Activated CD8-positive, alpha-beta T cell treated with anti-CD3 and anti-CD28 coated beads for 36 hours (primary cell): ENCODE measurements at regions of chr3 and their contacts with region 1.

Region 1: GRCh38 chr3:48268381-48269183 is 27.7 kb downstream of the ZNF589 start:
- DNase-seq: peak; percentile 98
- ATAC-seq: peak; percentile 93
- H3K4me3 Mint-ChIP-seq: peak overlapping the region; percentile 61
- H3K27ac Mint-ChIP-seq: peak overlapping the region; percentile 98
- H3K4me1 Mint-ChIP-seq: peaks cover 42% of the 10 kb centered on the region
- H3K27me3 Mint-ChIP-seq: no peaks in the 10 kb centered on the region
- CTCF ChIP-seq: no peak

Region 2: DNA sequence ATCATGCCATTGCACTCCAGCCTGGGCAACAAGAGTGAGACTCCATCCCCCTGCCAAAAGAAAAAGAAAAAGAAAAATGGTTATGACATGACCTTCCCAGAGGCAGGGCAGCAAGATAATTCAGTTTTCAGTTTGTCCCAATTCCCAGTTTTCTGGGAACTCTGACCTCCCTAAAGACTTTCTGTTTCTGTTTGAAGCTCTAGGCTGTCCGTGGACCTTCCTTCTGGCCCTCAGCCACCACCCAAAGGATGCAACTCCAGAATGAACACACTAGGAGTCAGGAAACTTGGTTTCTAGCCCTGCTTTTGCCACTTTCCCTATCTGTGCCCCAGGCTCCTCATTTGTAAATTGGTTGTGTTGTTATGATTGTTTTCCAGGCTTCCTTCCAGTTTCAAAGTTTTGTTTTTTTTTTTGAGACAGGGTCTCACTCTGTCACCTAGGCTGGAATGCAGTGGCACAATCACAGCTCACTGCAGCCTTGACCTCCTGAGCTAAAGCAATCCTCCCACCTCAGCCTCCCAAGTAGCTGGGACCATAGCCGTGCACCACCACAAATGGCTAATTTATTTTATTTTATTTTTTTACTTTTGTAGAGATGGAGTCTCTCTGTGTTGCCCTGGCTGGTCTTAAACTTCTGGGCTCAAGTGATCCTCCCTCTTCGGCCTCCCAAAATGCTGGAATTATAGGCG is 148.9 kb before region 1 on chr3:
- CTCF ChIA-PET with region 1: no interaction called
- POLR2A ChIA-PET with region 1: no interaction called
- intact Hi-C with region 1: no loop called
- DNase-seq: no peak
- ATAC-seq: no peak
- H3K4me3 Mint-ChIP-seq: no peak overlapping the region
- H3K27ac Mint-ChIP-seq: no peak overlapping the region
- H3K4me1 Mint-ChIP-seq: no peaks in the 10 kb centered on the region
- H3K27me3 Mint-ChIP-seq: no peaks in the 10 kb centered on the region
- CTCF ChIP-seq: no peak

Region 3: GRCh38 chr3:48232734-48233133 is 35.8 kb before region 1 on chr3:
- CTCF ChIA-PET with region 1: interaction called, 14 read pairs
- POLR2A ChIA-PET with region 1: interaction called, 3 read pairs
- intact Hi-C with region 1: no loop called
- DNase-seq: peak; percentile 87
- ATAC-seq: peak; percentile 99
- H3K4me3 Mint-ChIP-seq: no peak overlapping the region
- H3K27ac Mint-ChIP-seq: no peak overlapping the region
- H3K4me1 Mint-ChIP-seq: no peaks in the 10 kb centered on the region
- H3K27me3 Mint-ChIP-seq: no peaks in the 10 kb centered on the region
- CTCF ChIP-seq: peak; percentile 85

Region 4: DNA sequence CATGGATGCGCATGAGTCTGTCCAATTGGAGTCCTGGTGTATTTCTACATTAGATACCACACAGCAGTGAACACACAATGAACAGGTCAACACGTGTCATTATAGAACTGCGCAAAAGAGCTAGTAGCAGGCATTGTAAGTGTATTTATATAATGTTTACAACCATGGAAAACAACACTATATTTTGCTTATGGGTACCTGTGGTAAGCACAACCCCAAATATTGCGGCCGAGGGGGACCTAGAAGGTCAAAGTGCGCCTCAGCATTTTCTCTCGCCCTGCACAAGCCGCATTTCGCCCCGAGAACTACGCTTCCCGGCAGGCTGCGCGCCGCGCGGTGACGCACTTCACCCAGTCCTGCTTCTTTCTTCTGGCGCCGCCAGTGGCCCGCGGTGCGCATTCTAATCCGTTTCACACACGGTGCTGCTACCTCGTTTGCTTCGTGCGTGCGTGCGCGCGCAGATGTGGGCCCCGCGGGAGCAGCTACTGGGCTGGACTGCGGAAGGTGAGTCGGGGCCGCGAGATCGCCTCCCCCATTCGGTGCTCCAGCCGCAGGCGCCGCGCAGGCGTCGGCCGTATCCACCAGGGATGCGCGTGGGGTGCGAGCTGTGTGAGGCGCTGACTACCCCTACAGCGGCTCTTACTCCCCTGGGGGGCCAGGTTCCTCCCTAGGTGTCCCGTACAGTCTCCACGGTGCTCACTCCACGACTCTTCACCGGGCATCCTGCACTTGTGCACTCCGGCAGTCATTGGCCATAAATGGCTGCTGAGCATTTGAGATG is 27.7 kb before region 1 on chr3 and contains the start of gene ZNF589:
- CTCF ChIA-PET with region 1: interaction called, 14 read pairs
- POLR2A ChIA-PET with region 1: interaction called, 28 read pairs
- intact Hi-C with region 1: no loop called
- DNase-seq: peak; percentile 99
- ATAC-seq: peak; percentile 99
- H3K4me3 Mint-ChIP-seq: peak within 1 kb of the TSS; percentile 87
- H3K27ac Mint-ChIP-seq: peak within 1 kb of the TSS; percentile 94
- H3K4me1 Mint-ChIP-seq: peaks cover 24% of the 10 kb centered on the region
- H3K27me3 Mint-ChIP-seq: no peaks in the 10 kb centered on the region
- CTCF ChIP-seq: peak; percentile 19
- total RNA-seq, gene ZNF589: 30.4 to 32.8 TPM

Region 5: GRCh38 chr3:48256557-48256956 is 12.0 kb before region 1 on chr3:
- CTCF ChIA-PET with region 1: interaction called, 10 read pairs
- POLR2A ChIA-PET with region 1: interaction called, 7 read pairs
- intact Hi-C with region 1: no loop called
- DNase-seq: no peak
- ATAC-seq: no peak
- H3K4me3 Mint-ChIP-seq: no peak overlapping the region
- H3K27ac Mint-ChIP-seq: peak overlapping the region; percentile 38
- H3K4me1 Mint-ChIP-seq: peaks cover 5% of the 10 kb centered on the region
- H3K27me3 Mint-ChIP-seq: no peaks in the 10 kb centered on the region
- CTCF ChIP-seq: no peak